A673 (cell line): ENCODE measurements at regions of chr10 and their contacts with region 1.

Region 1: DNA sequence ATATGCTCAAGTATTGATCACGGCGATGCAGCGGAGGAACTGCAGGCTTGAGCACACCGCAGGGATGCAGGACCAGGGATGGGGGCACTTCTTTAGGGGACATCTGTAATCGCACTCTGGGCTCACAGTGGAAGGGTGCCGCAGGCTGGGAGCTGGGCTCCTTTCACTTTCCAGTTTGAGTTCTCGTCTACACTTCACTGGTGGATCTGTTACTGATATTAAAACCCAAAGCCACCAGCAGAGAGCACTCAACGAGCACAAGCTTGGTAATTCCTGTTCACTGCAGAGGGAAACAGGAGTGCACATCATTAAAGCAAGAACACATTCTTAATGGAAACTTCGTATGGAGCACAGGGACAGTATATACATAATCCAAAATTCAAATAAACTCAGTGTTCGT is 91.3 kb downstream of the PARD3 start:
- DNase-seq: peak; percentile 80
- H3K4me3 ChIP-seq: no peak overlapping the region
- H3K27ac ChIP-seq: no peak overlapping the region
- H3K4me1 ChIP-seq: peaks cover 17% of the 10 kb centered on the region
- H3K27me3 ChIP-seq: no peaks in the 10 kb centered on the region
- CTCF ChIP-seq: peak; percentile 70

Region 2: GRCh38 chr10:33643042-33643441 is 1080.7 kb before region 1 on chr10:
- CTCF ChIA-PET with region 1: no interaction called
- POLR2A ChIA-PET with region 1: no interaction called
- intact Hi-C with region 1: no loop called
- DNase-seq: no peak
- H3K4me3 ChIP-seq: no peak overlapping the region
- H3K27ac ChIP-seq: no peak overlapping the region
- H3K4me1 ChIP-seq: no peaks in the 10 kb centered on the region
- H3K27me3 ChIP-seq: no peaks in the 10 kb centered on the region
- CTCF ChIP-seq: no peak

Region 3: DNA sequence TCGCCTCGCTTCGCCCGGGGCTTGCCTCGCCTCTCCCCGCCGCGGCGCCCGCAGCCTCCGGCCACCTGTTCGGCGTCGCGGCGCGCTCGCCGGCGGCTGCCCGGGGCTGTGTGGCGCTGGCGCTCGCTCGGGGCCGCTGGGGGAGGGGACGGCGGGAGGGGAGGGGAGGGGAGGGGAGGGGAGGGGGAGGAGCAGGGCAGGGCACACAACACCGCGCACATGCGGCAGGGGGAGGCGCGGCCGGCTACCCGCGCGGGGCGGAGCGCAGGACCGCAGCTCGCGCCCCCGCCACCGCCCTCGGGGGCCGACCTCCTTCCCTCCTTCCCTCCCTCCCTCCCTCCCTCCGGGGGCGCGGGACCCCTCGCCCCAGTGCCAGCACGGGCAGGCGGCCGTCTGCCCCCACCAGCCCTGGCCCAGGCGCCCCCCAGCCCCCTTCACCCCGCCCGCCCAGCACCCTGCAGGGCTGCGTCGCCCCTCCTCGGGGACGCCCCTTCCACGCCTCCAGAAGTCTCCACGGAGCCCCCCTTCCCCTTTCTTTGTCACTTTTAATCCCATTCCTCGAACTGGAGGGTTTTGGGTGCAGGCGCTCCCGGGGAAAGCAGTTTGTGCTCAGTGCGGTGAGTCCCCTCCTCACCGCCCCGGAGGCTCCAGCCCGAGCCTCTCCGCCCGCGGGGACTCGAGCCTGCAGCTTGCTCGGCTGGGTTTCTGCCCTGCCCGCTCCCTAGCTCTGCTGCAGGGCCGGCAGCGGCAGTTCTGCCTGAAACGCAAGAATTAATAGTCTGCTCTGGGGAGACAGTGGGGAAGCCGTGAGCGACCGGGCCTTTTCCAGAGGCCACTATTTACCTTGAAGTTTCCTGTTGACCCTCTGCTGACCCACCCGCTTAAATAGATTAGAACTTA is 91.7 kb after region 1 on chr10 and contains the start of gene PARD3:
- CTCF ChIA-PET with region 1: no interaction called
- POLR2A ChIA-PET with region 1: no interaction called
- intact Hi-C with region 1: loop called (anchors 5 kb)
- DNase-seq: peak; percentile 79
- H3K4me3 ChIP-seq: peak within 1 kb of the TSS; percentile 78
- H3K27ac ChIP-seq: peak within 1 kb of the TSS; percentile 56
- H3K4me1 ChIP-seq: peaks cover 14% of the 10 kb centered on the region
- H3K27me3 ChIP-seq: no peaks in the 10 kb centered on the region
- CTCF ChIP-seq: no peak
- total RNA-seq, gene PARD3: 28.0 and 32.3 TPM in 2 replicates

Region 4: DNA sequence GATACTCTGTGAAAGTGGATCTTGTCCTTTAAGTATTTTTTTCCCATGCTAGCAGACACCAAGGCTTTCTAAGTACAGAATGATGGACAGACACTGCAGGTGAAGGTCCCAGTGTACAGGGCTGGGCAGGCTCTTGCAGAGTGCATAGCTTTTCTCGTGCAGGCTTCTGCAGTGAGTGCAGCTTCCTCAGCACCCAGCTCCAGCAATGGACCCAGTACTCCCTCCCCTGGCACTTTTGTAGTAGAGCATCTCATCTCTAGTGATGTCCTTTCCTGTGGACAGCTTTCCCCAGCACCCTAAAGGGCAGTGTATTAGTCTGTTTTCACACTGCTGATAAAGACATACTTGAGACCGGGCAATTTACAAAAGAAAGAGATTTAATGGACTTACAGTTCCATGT is 262.1 kb after region 1 on chr10:
- CTCF ChIA-PET with region 1: interaction called, 5 read pairs
- POLR2A ChIA-PET with region 1: no interaction called
- intact Hi-C with region 1: loop called (anchors 10 kb)
- DNase-seq: peak; percentile 44
- H3K4me3 ChIP-seq: no peak overlapping the region
- H3K27ac ChIP-seq: no peak overlapping the region
- H3K4me1 ChIP-seq: no peaks in the 10 kb centered on the region
- H3K27me3 ChIP-seq: no peaks in the 10 kb centered on the region
- CTCF ChIP-seq: peak; percentile 45

Region 5: GRCh38 chr10:35027567-35027966 is 303.8 kb after region 1 on chr10:
- CTCF ChIA-PET with region 1: no interaction called
- POLR2A ChIA-PET with region 1: no interaction called
- intact Hi-C with region 1: loop called (anchors 5 kb)
- DNase-seq: peak; percentile 25
- H3K4me3 ChIP-seq: no peak overlapping the region
- H3K27ac ChIP-seq: no peak overlapping the region
- H3K4me1 ChIP-seq: no peaks in the 10 kb centered on the region
- H3K27me3 ChIP-seq: no peaks in the 10 kb centered on the region
- CTCF ChIP-seq: peak; percentile 59